A549 (cell line): ENCODE measurements at regions of chr1 and their contacts with region 1.

Region 1: DNA sequence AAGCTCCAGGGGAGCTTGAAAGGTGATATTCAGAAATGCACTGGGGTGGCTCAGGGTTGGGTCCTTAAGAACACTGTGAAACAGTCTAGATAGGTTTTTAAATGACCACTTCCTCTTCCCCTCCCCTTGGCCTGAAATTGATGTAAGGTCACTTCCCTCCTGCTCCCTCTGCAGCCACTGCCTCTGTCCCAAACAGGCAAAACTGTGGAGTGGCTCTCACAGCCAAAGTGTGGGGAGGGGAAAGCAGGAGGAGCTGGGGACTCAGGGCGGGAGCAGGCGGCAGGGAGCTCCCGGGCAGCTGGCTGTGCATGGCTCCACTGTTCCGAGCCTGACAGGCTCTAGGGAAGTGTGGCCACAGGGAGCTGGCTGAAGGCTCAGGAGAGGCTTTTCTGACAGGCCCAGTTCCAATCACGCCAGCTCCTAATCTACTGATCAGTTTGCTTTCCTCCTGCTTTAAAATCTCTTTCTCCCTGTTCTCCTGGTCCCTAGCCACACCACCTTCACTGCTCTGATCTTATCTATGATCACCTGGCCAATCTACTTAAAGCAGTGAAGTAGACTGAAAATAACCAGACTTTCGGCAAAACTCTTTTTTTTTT is 5.1 kb upstream of the CSRP1 start:
- DNase-seq: no peak
- ATAC-seq: peak; percentile 30 to 45; a peak in 3 of 6 replicates
- H3K4me3 ChIP-seq: no peak overlapping the region
- H3K27ac ChIP-seq: peak overlapping the region; percentile 48 to 69; a peak in 5 of 6 replicates
- H3K4me1 ChIP-seq: peaks cover 38% of the 10 kb centered on the region
- CTCF ChIP-seq: no peak
- EP300 ChIP-seq: no peak
- POLR2A ChIP-seq: no peak
- RAD21 ChIP-seq: no peak

Region 2: DNA sequence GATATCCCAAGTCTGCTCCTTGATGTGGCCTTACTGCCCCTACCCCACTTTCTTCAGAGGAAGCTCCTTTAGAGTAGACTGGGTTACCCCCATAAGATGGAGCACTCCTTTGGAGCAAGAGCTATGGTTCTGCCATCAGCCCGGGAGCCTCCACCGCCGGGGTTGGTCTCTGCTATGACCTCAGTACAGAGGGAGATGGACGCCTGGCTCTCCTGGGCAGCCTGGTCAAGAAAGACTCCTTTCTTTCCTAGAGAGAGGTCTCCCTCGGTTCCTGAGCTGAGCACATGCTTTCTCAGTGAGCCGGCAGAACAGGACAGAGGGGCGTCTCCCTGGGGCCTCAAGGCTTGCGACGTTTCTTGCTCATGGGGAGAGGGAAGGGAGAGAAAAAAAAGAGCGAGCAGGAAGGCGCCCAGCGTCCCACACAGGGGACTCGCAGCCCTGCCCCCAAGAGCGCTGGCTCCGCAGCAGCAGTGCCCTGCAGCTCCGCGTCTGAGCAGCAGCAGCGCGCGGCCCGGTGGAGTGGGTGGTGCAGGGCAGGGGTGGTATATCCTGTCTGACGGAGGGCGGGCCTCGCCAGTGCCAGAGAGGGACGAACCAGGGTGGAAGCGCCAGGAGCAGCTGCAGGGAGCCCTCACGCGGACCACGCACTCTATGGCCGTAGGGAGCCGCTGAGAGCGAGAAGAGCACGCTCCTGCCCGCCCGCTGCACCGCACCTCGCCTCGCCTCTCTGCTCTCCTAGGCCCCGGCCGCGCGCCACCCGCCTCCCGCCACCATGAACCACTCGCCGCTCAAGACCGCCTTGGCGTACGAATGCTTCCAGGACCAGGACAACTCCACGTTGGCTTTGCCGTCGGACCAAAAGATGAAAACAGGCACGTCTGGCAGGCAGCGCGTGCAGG is 228.9 kb before region 1 on chr1 and contains the start of gene PKP1:
- CTCF ChIA-PET with region 1: no interaction called
- POLR2A ChIA-PET with region 1: no interaction called
- DNase-seq: no peak
- ATAC-seq: no peak; a peak in 1 of 6 replicates
- H3K4me3 ChIP-seq: no peak within 1 kb of the TSS
- H3K27ac ChIP-seq: no peak within 1 kb of the TSS; a peak in 1 of 6 replicates
- H3K4me1 ChIP-seq: peaks cover 5% of the 10 kb centered on the region; the same call in 2 of the 3 replicates
- CTCF ChIP-seq: no peak
- EP300 ChIP-seq: no peak
- POLR2A ChIP-seq: no peak
- RAD21 ChIP-seq: no peak
- polyA plus RNA-seq, gene PKP1: not detected in 2 replicates

Region 3: GRCh38 chr1:201348211-201348566 is 163.9 kb before region 1 on chr1:
- CTCF ChIA-PET with region 1: interaction called, 17 read pairs
- POLR2A ChIA-PET with region 1: no interaction called
- DNase-seq: peak; percentile 64 to 92
- ATAC-seq: peak; percentile 86 to 95
- H3K4me3 ChIP-seq: no peak overlapping the region
- H3K27ac ChIP-seq: no peak overlapping the region
- H3K4me1 ChIP-seq: 0 out of 3 replicates have a peak, but pooled peaks cover 5% of the 10 kb centered on the region
- CTCF ChIP-seq: peak; percentile 67
- EP300 ChIP-seq: no peak
- POLR2A ChIP-seq: no peak
- RAD21 ChIP-seq: peak; percentile 69 to 71

Region 4: GRCh38 chr1:201436393-201436792 is 75.6 kb before region 1 on chr1:
- CTCF ChIA-PET with region 1: interaction called, 86 read pairs
- POLR2A ChIA-PET with region 1: interaction called, 3 read pairs
- DNase-seq: peak; percentile 62 to 68
- ATAC-seq: peak; percentile 99
- H3K4me3 ChIP-seq: no peak overlapping the region
- H3K27ac ChIP-seq: peak overlapping the region; percentile 21 to 58; a peak in 3 of 6 replicates
- H3K4me1 ChIP-seq: peaks cover 14% of the 10 kb centered on the region
- CTCF ChIP-seq: no peak
- EP300 ChIP-seq: no peak
- POLR2A ChIP-seq: no peak
- RAD21 ChIP-seq: peak; percentile 13 to 43; a peak in 2 of 5 replicates

Region 5: GRCh38 chr1:201468844-201469511 is 43.1 kb before region 1 on chr1 and contains the start of gene PHLDA3:
- CTCF ChIA-PET with region 1: interaction called, 35 read pairs
- POLR2A ChIA-PET with region 1: interaction called, 10 read pairs
- DNase-seq: peak; percentile 77 to 78
- ATAC-seq: peak; percentile 81 to 87
- H3K4me3 ChIP-seq: peak within 1 kb of the TSS; percentile 80
- H3K27ac ChIP-seq: peak within 1 kb of the TSS; percentile 93 to 99
- H3K4me1 ChIP-seq: peaks cover 50% of the 10 kb centered on the region
- CTCF ChIP-seq: peak; percentile 8; the same call in 1 of the 3 replicates
- EP300 ChIP-seq: no peak
- POLR2A ChIP-seq: peak; percentile 85
- RAD21 ChIP-seq: peak in 1 of 2 experiments; percentile 24; a peak in 2 of 5 replicates
- polyA plus RNA-seq, gene PHLDA3: 34.3 and 40.5 TPM in 2 replicates

Region 6: GRCh38 chr1:201530741-201531531 is 18.9 kb after region 1 on chr1:
- CTCF ChIA-PET with region 1: interaction called, 1,452 read pairs
- POLR2A ChIA-PET with region 1: no interaction called
- DNase-seq: peak; percentile 75 to 89
- ATAC-seq: peak; percentile 89 to 94
- H3K4me3 ChIP-seq: no peak overlapping the region
- H3K27ac ChIP-seq: peak overlapping the region in 1 of 2 experiments; percentile 52; a peak in 2 of 6 replicates
- H3K4me1 ChIP-seq: peaks cover 21% of the 10 kb centered on the region
- CTCF ChIP-seq: peak; percentile 90
- EP300 ChIP-seq: no peak
- POLR2A ChIP-seq: no peak
- RAD21 ChIP-seq: peak; percentile 93 to 96

Region 7: DNA sequence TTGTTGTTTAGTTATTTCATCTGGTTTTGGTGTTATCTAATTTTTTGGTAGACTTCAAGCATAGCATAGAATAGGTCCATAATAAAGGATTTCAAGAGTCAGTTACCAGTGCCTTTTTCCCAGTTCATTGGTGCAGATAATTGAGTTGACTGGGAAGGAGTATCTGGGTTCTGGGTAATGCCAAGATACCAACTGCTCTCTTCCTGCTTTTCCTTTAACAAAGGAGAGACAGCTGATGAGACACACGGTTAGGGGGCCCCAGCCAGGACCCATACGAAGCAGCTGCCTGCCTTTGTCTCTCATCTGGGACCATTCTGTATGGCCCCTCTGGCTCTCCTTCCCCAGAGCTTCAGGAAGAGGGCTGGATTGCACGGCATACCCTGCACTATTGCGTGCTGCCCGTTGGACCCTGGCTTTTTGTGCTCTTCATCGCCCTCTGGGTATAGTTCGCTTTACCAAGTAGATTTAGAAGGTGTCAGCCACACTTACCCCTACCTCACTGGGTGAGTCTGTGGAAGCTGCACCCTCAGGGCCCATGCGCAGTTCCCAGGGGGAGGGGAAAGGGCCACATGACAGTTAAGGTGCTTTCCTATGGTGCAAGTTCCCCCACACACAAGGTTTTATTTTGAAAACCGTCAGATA is 33.9 kb after region 1 on chr1:
- CTCF ChIA-PET with region 1: interaction called, 16 read pairs
- POLR2A ChIA-PET with region 1: no interaction called
- DNase-seq: peak; percentile 47 to 55
- ATAC-seq: peak; percentile 96 to 98
- H3K4me3 ChIP-seq: no peak overlapping the region
- H3K27ac ChIP-seq: peak overlapping the region in 1 of 2 experiments; percentile 70; a peak in 3 of 6 replicates
- H3K4me1 ChIP-seq: peaks cover 6% of the 10 kb centered on the region; the same call in 1 of the 3 replicates
- CTCF ChIP-seq: no peak; the same call in none of the 3 replicates
- EP300 ChIP-seq: no peak
- POLR2A ChIP-seq: no peak
- RAD21 ChIP-seq: no peak